Activated CD4-positive, alpha-beta T cell treated with anti-CD3 and anti-CD28 coated beads for 36 hours (primary cell): ENCODE measurements at regions of chr2 and their contacts with region 1.

Region 1: DNA sequence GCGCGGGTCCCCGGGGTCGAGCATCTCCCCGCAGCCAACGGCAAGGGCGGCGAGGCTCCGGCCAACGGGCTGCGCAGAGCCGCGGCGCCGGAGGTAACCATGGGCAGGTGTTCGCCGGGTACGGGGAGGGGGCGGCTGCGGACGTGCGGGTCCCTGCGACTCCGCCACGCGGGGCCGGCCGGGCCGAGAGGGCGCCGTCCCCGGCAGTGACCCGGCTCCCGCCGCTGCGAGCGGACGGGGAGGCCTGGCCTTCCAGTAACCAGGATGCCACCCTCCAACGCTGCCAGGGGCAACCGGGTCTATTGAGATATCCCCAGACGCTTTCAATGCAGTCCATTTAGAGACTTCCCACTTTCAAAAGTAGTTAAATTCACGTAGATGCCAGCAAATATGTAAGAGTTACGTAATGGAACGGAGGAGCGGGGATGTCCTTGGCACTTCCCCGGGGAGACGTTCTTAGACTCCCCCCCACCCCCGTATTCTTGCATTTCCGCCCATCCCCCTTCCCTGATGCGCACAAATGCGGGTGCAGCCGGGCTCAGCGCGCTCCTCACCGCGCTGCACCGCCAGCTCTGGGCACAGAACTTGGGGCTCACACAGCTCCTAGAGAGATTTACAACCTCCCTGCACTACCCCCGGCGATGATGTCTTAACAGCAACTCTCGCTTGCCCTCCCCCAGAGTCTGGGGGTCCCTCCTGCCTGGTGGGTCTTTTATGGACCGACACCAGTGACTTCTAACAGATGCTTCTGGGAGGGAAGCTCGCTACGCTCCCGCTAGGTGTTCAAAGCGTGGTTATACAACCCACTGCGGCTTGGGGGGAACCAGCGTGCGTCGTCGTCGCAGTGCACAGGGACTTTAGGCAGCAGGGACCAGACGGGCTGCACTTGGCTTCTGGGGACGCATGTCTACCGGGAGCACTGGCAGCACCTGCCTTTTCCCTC is 657 bp downstream of the SGPP2 start:
- DNase-seq: peak; percentile 62
- ATAC-seq: peak; percentile 27
- H3K4me3 Mint-ChIP-seq: peak overlapping the region; percentile 85
- H3K27ac Mint-ChIP-seq: peak overlapping the region; percentile 90
- H3K4me1 Mint-ChIP-seq: peaks cover 50% of the 10 kb centered on the region
- H3K27me3 Mint-ChIP-seq: peaks cover 42% of the 10 kb centered on the region

Region 2: DNA sequence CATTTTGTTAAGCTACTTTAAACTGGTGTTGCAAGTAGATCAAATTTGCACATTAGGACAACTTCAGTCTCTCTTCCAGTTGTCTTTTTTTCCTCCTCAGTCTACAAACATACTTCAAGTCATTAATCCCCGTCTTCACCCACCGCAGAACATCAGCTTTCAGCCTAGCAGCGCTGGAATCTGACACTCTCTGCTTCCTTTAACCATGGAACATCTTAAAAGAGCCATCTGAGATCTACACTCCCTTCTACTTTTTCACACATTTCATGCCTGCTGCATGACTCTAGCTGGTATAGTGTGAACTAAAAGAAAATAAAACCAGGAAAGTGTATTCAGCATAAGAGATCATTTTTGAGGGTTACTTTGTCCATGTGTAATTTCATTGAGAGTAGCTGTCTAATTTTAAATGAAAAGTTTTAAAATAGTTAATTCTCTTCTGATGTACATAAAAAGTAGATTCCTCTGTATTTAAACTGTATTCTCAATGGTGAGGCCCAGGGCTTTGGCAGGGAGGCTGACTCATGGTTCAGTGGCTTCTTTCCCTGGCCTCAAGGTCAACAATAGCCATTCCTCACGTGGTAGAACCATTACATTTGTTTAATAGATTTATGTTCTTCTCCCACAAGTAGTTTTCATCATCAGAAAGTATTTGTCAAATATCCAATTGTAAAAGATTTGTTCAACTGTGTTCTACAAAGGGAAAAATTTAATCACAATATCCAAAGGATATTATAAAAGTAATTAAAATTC is 15.8 kb after region 1 on chr2:
- CTCF ChIA-PET with region 1: no interaction called
- POLR2A ChIA-PET with region 1: no interaction called
- intact Hi-C with region 1: no loop called
- DNase-seq: no peak
- ATAC-seq: no peak
- H3K4me3 Mint-ChIP-seq: no peak overlapping the region
- H3K27ac Mint-ChIP-seq: no peak overlapping the region
- H3K4me1 Mint-ChIP-seq: no peaks in the 10 kb centered on the region
- H3K27me3 Mint-ChIP-seq: no peaks in the 10 kb centered on the region

Region 3: DNA sequence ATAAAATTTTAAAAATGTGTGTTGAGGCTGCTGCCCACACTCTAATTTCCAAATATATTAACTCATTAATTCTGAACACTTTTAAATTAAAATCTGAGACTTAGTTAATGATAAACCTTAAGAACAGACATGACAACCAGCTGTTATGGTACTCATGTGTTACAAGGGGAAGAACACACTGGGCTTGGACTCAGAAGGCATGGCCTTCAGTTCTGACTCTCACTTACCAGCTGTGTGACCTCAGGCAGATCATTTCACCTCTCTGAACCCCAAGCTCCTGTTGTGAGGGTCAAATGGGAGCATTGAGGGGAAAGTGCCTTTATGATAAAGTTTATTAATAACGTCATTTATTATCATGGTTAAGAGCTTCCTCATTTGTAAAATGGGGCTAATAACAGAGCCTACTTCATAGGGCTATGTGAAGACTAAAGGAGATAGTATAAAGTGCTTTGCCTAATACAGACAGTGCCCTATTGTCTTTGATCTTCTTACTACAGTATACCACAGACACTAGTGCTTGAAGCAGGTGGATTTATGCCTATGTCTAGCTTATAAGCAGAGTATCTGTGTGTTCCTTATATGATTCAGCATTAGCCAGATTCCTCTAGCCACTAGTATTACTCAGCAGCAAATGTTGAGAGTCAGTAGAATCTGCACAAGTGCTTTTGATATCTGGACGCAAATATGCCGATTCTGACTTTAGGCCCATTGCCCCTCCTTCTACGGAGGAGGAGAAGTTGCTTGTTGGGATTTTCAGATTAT is 99.0 kb after region 1 on chr2:
- CTCF ChIA-PET with region 1: no interaction called
- POLR2A ChIA-PET with region 1: no interaction called
- intact Hi-C with region 1: loop called in 1 of 2 experiments (anchors 10 kb)
- DNase-seq: no peak
- ATAC-seq: no peak
- H3K4me3 Mint-ChIP-seq: no peak overlapping the region
- H3K27ac Mint-ChIP-seq: no peak overlapping the region
- H3K4me1 Mint-ChIP-seq: no peaks in the 10 kb centered on the region
- H3K27me3 Mint-ChIP-seq: peaks cover 4% of the 10 kb centered on the region

Region 4: DNA sequence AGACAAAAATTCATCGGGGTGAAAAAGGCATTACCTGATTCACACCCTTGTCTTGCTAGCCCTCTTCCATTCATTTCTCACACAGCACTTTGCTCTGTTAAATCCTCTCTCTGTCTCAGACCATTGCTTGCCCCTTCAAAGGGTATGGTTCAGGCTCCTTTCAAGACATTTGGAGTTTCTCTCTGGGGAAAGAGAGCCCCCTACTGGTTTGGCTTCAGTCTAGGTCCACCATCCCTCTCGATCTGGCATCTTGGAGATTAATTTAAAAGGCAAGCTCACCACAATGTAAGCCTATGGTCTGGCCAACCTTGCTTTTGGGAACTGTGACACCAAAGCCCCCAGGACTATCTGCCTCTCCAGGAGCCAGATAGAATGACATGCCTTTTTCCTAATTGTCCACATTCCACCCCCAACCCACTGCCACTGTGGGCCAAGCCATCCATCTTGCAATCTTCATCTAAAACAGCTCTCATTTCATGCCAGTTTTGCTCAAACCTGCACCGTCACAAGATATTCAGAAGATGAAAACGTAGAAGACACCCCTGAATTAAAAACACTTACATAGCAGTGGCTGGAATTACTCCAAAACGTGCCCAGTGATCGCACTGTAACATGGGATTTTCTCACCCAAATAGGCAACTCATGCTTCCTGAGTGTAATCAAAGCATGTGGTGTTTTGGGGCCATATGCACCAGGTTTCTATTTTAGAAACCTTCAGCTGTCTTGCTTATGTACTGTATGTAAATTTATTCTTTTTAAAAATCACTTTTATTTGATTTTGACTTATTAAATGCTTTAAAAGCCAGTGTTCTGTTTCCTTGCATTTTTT is 137.0 kb after region 1 on chr2:
- CTCF ChIA-PET with region 1: interaction called, 3 read pairs
- POLR2A ChIA-PET with region 1: no interaction called
- intact Hi-C with region 1: loop called in 1 of 2 experiments (anchors 10 kb)
- DNase-seq: peak; percentile 50
- ATAC-seq: peak; percentile 84
- H3K4me3 Mint-ChIP-seq: no peak overlapping the region
- H3K27ac Mint-ChIP-seq: no peak overlapping the region
- H3K4me1 Mint-ChIP-seq: peaks cover under 1% of the 10 kb centered on the region
- H3K27me3 Mint-ChIP-seq: peaks cover 1% of the 10 kb centered on the region

Region 5: DNA sequence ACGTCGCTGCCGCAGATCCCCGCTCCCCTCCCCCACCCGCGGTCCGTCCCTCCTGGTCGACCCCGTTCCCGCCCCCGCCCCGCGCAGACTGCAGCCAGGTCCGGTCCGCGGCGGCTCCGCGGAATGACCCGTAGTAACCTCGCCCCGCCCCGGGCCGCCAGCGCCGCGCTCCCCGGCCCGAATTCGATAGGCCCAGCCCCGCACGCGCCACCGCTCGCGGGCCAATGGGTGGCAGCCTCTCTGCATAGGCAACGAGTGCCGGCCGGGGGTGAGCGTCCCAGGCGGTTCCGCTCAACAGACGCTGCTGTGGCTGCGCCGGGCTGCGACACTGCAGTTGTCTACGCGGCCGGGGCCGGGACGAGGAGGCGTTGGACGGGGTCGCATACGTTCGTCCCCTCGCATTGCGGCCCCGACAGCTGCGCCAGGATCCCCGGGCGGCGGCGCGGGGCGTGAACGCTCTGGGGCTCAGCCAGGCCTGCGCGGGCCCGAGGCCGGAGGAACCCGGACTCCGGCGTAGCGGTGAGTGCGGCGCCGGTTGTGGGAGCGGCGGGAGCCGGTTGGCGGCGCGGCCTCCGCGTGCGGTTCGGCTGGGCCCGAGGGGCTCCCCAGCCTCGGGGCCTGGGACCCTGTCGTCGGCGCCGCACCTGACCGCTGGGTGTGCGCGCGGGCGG is 435.9 kb after region 1 on chr2 and contains the start of gene ACSL3:
- CTCF ChIA-PET with region 1: no interaction called
- POLR2A ChIA-PET with region 1: no interaction called
- intact Hi-C with region 1: loop called in 1 of 2 experiments (anchors 5 kb)
- DNase-seq: peak; percentile 97
- ATAC-seq: peak; percentile 100
- H3K4me3 Mint-ChIP-seq: peak within 1 kb of the TSS; percentile 67
- H3K27ac Mint-ChIP-seq: peak within 1 kb of the TSS; percentile 91
- H3K4me1 Mint-ChIP-seq: peaks cover 9% of the 10 kb centered on the region
- H3K27me3 Mint-ChIP-seq: peaks cover 4% of the 10 kb centered on the region
- total RNA-seq, gene ACSL3: 46.2 to 48.8 TPM